Heart right ventricle (tissue), 16 donors: ENCODE measurements at regions of chr10 and their contacts with region 1.

Region 1: GRCh38 chr10:22988581-22989360 is 60.9 kb downstream of the ARMC3 start:
- DNase-seq: peak in 1 of 2 donors; percentile 71
- ATAC-seq: peak; percentile 58 to 88 (median 78)
- H3K4me3 ChIP-seq: peak overlapping the region in 2 of 10 donors; percentile 23 to 32
- H3K27ac ChIP-seq: no peak overlapping the region
- H3K4me1 ChIP-seq: peaks cover 0 to 13% (median 2%) of the 10 kb centered on the region in 9 donors
- H3K27me3 ChIP-seq: peaks cover 0 to 3% (median 0%) of the 10 kb centered on the region in 7 donors
- CTCF ChIP-seq: peak; percentile 80 to 96 (median 91)

Region 2: GRCh38 chr10:21995557-21995956 is 993.2 kb before region 1 on chr10:
- intact Hi-C with region 1: loop called in 4 of 10 experiments (anchors 1 to 5 kb)
- DNase-seq: no peak
- ATAC-seq: no peak
- H3K4me3 ChIP-seq: no peak overlapping the region
- H3K27ac ChIP-seq: no peak overlapping the region
- H3K4me1 ChIP-seq: peaks cover 0 to 19% (median 0%) of the 10 kb centered on the region in 9 donors
- H3K27me3 ChIP-seq: no peaks in the 10 kb centered on the region
- CTCF ChIP-seq: no peak

Region 3: DNA sequence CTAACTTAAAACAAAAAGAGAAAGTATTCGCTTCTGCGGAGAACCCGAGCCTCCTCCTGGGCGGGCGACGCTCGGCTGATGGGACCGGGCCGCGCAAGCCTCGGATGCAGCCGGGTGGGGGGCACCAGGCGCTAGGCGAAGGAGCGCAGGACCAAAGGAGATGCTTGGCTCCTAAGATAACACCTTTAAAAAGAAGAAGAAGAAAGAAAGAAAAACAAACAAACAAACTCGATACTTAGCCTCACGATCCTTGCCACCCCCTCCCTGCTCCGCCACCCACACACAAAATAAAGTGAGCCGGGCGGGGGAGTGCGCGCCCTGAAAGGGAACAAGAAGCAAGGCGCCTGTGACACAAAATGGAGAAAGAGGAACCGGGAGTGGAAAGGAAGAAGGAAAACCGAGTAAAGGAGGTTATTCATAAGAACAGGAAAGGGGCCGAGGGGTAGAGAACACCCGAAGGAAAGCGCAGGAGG is 737.0 kb before region 1 on chr10:
- intact Hi-C with region 1: loop called in 2 of 10 experiments (anchors 10 kb)
- DNase-seq: peak; percentile 64 to 79
- ATAC-seq: peak; percentile 54 to 82 (median 68)
- H3K4me3 ChIP-seq: peak overlapping the region; percentile 43 to 85 (median 76)
- H3K27ac ChIP-seq: peak overlapping the region; percentile 96 to 99 (median 98)
- H3K4me1 ChIP-seq: peaks cover 0 to 37% (median 12%) of the 10 kb centered on the region in 9 donors
- H3K27me3 ChIP-seq: peaks cover 0 to 13% (median 0%) of the 10 kb centered on the region in 7 donors
- CTCF ChIP-seq: no peak

Region 4: DNA sequence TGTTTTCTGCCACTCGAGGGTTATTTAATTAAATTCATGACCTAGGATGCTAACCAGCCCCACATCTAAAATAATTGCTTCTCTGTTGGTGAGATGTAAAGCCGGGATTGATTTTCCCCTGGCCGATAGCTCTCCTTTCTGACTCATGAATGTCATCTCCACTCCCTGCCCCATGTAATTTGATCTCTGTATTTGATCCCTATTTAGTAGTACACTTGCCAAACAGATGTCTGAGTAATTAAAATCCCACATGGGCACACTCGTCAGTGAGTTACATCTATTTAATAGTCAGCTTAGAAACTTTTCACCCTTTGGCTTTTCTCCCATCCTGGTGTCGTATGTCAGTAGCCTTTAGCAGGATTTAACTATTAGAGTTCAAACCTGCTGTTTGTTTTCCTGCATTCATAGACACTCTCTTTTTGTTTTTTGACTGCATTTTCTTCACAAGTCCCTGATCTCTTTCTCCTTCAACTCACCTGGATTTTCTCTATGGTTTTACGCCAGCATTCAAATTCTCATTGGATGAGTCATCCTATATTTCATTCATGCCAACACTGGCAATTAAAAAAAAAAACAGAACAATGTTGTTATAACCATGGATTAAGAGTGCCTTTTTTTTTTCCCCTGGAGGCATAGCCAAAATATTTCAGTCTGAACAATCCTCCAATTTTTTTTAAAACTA is 560.7 kb before region 1 on chr10:
- intact Hi-C with region 1: loop called in 2 of 10 experiments (anchors 1 to 10 kb)
- DNase-seq: no peak
- ATAC-seq: peak in 3 of 8 donors; percentile 42 to 48 (median 44)
- H3K4me3 ChIP-seq: no peak overlapping the region
- H3K27ac ChIP-seq: no peak overlapping the region
- H3K4me1 ChIP-seq: peaks cover 0 to 31% (median 9%) of the 10 kb centered on the region in 9 donors
- H3K27me3 ChIP-seq: peaks cover 0 to 17% (median 0%) of the 10 kb centered on the region in 7 donors
- CTCF ChIP-seq: no peak

Region 5: GRCh38 chr10:22573820-22574569 is 414.8 kb before region 1 on chr10:
- intact Hi-C with region 1: loop called in 7 of 10 experiments (anchors 2 to 10 kb)
- DNase-seq: peak in 1 of 2 donors; percentile 20
- ATAC-seq: peak in 2 of 8 donors; percentile 42 to 45
- H3K4me3 ChIP-seq: no peak overlapping the region
- H3K27ac ChIP-seq: peak overlapping the region in 1 of 10 donors; percentile 39
- H3K4me1 ChIP-seq: peaks cover 0 to 15% (median 0%) of the 10 kb centered on the region in 9 donors
- H3K27me3 ChIP-seq: no peaks in the 10 kb centered on the region
- CTCF ChIP-seq: peak in 8 of 9 donors; percentile 28 to 75 (median 50)

Region 6: GRCh38 chr10:22765660-22766547 is 222.9 kb before region 1 on chr10:
- intact Hi-C with region 1: loop called in 1 of 10 experiments (anchors 10 kb)
- DNase-seq: no peak
- ATAC-seq: peak in 3 of 8 donors; percentile 20 to 38 (median 29)
- H3K4me3 ChIP-seq: no peak overlapping the region
- H3K27ac ChIP-seq: peak overlapping the region in 3 of 10 donors; percentile 3 to 12 (median 10)
- H3K4me1 ChIP-seq: peaks cover 0 to 37% (median 17%) of the 10 kb centered on the region in 9 donors
- H3K27me3 ChIP-seq: no peaks in the 10 kb centered on the region
- CTCF ChIP-seq: no peak